GM12878 (cell line): ENCODE measurements at regions of chr3 and their contacts with region 1.

Region 1: DNA sequence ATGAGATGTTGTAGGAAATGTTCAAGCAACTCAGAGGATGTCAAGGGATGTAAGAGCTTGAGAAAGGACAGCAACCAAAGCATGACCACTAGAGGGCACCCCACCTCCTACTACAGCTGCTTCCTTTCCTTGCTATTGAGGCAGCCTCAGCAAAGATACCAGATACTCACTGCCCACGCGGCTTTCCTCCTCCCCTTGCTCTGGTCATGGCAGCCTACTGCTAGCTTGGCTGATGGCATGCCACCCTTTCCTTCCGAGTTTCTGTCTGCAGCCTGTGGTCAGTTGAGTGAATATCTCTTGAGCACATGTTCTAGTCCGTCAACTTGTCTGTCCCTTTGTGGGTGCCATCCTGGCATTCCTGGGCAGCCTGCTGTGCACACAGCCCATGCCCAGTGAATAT is 4.4 kb upstream of the CXCR6 start:
- DNase-seq: peak; percentile 66
- ATAC-seq: peak; percentile 97
- H3K4me3 ChIP-seq: no peak overlapping the region
- H3K27ac ChIP-seq: no peak overlapping the region
- H3K4me1 ChIP-seq: peaks cover 7% of the 10 kb centered on the region
- H3K27me3 ChIP-seq: no peaks in the 10 kb centered on the region
- CTCF ChIP-seq: peak; percentile 88 to 94 (median 91); a peak in 5 of 6 replicates
- EP300 ChIP-seq: no peak
- POLR2A ChIP-seq: no peak
- RAD21 ChIP-seq: peak; percentile 94

Region 2: DNA sequence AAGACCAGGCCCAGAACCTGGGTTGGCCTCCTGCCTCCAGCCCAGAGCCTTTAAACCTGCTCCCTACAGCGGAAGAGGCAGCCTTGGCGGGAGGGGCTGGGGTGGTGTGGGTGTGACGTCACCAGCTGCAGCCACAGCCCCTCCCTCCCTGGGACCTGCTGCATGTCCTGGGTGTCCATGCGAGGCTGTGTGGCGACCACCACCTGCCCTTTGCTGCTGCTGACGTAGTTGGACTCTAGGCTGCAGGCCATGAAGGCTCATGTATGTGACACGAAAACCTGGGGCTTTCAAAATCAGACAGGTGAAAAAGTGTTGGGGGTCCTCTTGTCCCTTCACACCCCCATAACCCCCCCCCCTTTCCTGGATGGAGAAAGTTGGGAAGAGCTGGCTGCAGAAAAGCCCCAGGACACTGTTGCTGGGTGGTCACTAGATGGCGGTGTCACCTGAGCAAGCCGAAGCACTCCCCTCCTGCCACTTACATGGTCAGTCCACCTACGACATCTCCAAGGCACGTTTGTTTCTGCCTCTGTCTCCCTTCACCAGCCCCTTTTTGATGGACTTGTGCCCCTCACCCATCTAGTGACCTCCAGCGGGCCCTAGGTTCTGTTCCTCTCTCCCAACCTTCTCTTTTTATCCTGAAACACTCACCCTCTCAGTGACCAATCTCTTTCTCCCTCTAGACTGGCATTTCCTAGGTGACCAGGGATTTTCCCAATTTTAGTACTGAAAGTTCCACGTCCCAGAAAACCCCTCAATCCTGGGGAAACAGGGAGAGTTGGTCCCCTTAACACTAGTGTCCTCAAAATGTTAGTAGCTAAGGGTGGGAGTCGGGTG is 177.8 kb before region 1 on chr3:
- CTCF ChIA-PET with region 1: interaction called, 189 read pairs
- POLR2A ChIA-PET with region 1: no interaction called
- RAD21 ChIA-PET with region 1: interaction called, 4 read pairs
- SMC1A ChIA-PET with region 1: interaction called, 7 read pairs
- in situ Hi-C with region 1: no loop called
- intact Hi-C with region 1: no loop called
- DNase-seq: peak; percentile 5
- ATAC-seq: peak; percentile 98
- H3K4me3 ChIP-seq: no peak overlapping the region
- H3K27ac ChIP-seq: no peak overlapping the region
- H3K4me1 ChIP-seq: no peaks in the 10 kb centered on the region
- H3K27me3 ChIP-seq: 0 out of 4 replicates have a peak, but pooled peaks cover 0 to 2% of the 10 kb centered on the region in 2 experiments
- CTCF ChIP-seq: peak; percentile 80 to 89 (median 83)
- EP300 ChIP-seq: no peak
- POLR2A ChIP-seq: no peak
- RAD21 ChIP-seq: peak; percentile 87

Region 3: GRCh38 chr3:45958321-45958791 is 19.5 kb after region 1 on chr3:
- CTCF ChIA-PET with region 1: interaction called, 33 read pairs
- POLR2A ChIA-PET with region 1: no interaction called
- RAD21 ChIA-PET with region 1: interaction called, 13 read pairs
- SMC1A ChIA-PET with region 1: interaction called, 15 read pairs
- in situ Hi-C with region 1: no loop called
- intact Hi-C with region 1: no loop called
- DNase-seq: no peak
- ATAC-seq: no peak
- H3K4me3 ChIP-seq: no peak overlapping the region
- H3K27ac ChIP-seq: no peak overlapping the region
- H3K4me1 ChIP-seq: peaks cover 19% of the 10 kb centered on the region
- H3K27me3 ChIP-seq: no peaks in the 10 kb centered on the region
- CTCF ChIP-seq: no peak
- EP300 ChIP-seq: no peak
- POLR2A ChIP-seq: no peak
- RAD21 ChIP-seq: no peak

Region 4: DNA sequence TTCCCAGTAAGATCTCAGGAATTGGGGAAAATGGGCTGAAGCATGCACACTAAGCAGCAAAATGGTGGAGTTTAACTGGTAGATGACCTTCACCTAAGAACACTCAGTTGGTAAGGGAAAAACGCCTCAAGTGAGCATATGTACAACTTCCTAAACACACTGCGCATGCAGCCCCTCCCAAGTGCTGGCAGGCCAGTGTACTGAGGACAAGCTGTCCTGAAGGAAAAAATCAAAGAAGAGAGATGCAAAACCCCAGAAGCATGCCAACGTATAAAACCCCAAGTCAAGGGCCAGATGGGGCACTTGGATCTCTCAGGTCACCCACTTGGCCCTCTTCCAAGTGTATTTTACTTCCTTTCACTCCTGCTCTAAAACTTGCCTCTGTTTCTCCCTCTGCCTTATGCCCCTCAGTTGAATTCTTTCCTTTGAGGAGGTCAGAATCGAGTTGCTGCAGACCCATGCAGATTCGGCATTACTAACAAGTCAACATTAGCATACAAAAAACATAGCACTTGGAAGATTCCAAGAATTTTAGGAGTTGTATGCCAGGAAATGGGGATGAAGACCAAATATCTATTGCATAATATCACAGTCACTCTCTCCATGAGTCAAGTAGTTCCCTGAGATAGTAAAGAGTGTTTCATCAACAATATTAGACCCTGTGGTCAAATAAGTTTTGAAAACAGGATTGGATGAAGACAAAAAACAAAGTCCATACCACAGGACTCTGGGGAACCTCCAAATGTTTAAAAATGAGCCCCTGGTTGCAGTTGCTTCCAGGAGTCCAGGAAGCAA is 67.6 kb after region 1 on chr3:
- CTCF ChIA-PET with region 1: interaction called, 10 read pairs
- POLR2A ChIA-PET with region 1: no interaction called
- RAD21 ChIA-PET with region 1: interaction called, 4 read pairs
- SMC1A ChIA-PET with region 1: interaction called, 3 read pairs
- in situ Hi-C with region 1: no loop called
- intact Hi-C with region 1: no loop called
- DNase-seq: no peak
- ATAC-seq: no peak
- H3K4me3 ChIP-seq: no peak overlapping the region
- H3K27ac ChIP-seq: no peak overlapping the region
- H3K4me1 ChIP-seq: peaks cover 3% of the 10 kb centered on the region
- H3K27me3 ChIP-seq: no peaks in the 10 kb centered on the region
- CTCF ChIP-seq: no peak
- EP300 ChIP-seq: no peak
- POLR2A ChIP-seq: no peak
- RAD21 ChIP-seq: no peak

Region 5: DNA sequence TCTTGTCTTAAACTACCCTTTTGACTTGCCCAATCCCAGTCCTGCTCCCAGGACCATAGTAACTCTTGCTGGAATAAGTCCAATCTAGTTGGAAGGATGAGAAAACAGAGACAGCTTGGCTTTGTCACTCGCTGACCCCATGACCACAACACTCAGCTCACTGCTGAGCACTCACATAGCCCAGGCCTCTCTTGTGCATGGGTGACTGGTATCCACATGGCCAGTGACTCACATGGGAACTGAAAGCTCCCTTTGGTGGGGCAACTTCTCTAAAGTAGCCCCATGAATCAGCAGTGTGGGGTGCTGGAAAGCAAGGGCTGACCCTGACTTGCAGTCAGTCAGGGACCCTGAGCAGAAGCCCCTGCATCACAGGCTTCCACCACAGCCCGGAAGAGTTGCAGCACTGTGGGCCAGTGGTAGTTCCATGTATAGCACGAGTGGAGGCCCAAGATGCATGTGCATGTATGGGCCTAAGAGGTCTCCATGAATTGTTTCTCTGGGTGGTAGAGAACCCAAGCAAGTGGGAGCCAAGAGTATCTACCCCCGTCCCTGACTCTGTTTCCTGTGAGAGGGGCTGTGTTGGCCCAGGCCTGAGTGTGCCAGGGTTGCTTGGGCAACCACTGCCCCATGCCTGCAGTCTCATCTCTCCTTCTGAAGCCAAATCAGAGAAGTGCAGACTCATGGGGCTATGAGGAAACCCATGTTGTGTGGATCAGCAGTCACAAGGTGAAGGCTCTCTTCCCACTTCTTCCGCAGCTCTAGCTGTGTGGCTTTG is 150.6 kb after region 1 on chr3:
- CTCF ChIA-PET with region 1: interaction called, 14 read pairs
- POLR2A ChIA-PET with region 1: interaction called, 4 read pairs
- RAD21 ChIA-PET with region 1: interaction called, 12 read pairs
- SMC1A ChIA-PET with region 1: interaction called, 523 read pairs
- in situ Hi-C with region 1: no loop called
- intact Hi-C with region 1: no loop called
- DNase-seq: peak; percentile 78
- ATAC-seq: peak; percentile 90
- H3K4me3 ChIP-seq: no peak overlapping the region
- H3K27ac ChIP-seq: peak overlapping the region; percentile 20; the same call in 1 of the 2 replicates
- H3K4me1 ChIP-seq: peaks cover 58% of the 10 kb centered on the region
- H3K27me3 ChIP-seq: no peaks in the 10 kb centered on the region
- CTCF ChIP-seq: no peak
- EP300 ChIP-seq: peak; percentile 24 to 75; a peak in 2 of 4 replicates
- POLR2A ChIP-seq: no peak
- RAD21 ChIP-seq: 0 out of 2 replicates have a peak, but pooled peaks have one; percentile 5